ENCODE measurements at regions of chr3 and their contacts with region 1.

Region 1: GRCh38 chr3:88003115-88003755 is 55.6 kb downstream of the CGGBP1 start:
- DNase-seq: peak; percentile 55 to 75 (median 75)
- H3K4me3 ChIP-seq: no peak overlapping the region
- H3K4me3 Mint-ChIP-seq: no peak overlapping the region
- H3K27ac ChIP-seq: no peak overlapping the region
- H3K27ac Mint-ChIP-seq: peak overlapping the region in 1 of 7 donors; percentile 26
- H3K4me1 ChIP-seq: peaks cover 10 to 18% of the 10 kb centered on the region in 2 donors
- H3K4me1 Mint-ChIP-seq: peaks cover 27% of the 10 kb centered on the region
- H3K27me3 ChIP-seq: no peaks in the 10 kb centered on the region
- H3K27me3 Mint-ChIP-seq: no peaks in the 10 kb centered on the region
- CTCF ChIP-seq: peak; percentile 84

Region 2: DNA sequence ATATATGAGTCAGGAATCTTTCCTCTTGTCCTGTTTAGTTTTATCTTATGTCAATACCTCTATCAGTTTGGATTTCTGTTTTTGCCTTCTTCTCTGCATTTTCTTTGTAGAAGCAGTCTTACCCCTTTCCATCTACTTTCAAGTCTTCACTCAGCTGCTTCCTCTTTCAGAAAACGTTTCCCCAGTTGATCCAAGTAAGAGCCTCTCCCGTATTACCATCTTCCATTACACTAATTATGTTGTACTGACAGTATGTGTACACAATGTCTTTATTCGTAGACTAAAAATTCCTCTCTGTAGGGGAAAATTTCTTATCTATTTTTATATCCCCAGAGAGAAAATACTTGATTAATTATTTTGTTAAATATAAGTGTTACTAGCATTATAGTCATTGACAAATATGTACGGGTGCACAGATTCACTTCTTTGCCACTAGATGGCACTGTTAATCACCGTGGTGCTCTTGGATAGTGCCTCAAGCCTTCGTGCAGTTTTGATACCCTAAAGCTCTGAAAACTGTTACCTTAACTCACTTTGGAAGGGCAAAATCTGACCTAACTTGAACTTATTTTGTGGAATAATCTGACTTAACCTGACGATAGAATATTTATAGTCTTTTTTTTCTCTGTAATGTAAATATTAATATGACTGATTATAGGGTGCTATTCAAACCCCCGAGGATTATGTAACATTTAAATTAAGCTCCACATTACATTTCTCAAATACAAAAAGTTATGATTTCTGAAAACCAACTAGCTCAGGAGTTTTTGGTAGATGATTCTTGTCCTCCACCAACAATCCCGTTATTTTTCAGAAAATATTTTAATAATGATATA is 652.7 kb before region 1 on chr3:
- intact Hi-C with region 1: loop called (anchors 5 kb)
- DNase-seq: peak; percentile 32 to 54 (median 47)
- H3K4me3 ChIP-seq: no peak overlapping the region
- H3K4me3 Mint-ChIP-seq: no peak overlapping the region
- H3K27ac ChIP-seq: no peak overlapping the region
- H3K27ac Mint-ChIP-seq: no peak overlapping the region
- H3K4me1 ChIP-seq: no peaks in the 10 kb centered on the region
- H3K4me1 Mint-ChIP-seq: peaks cover 2% of the 10 kb centered on the region
- H3K27me3 ChIP-seq: no peaks in the 10 kb centered on the region
- H3K27me3 Mint-ChIP-seq: peaks cover 0 to 1% (median 0%) of the 10 kb centered on the region in 3 donors
- CTCF ChIP-seq: peak; percentile 88

Region 3: GRCh38 chr3:87771341-87772192 is 231.7 kb before region 1 on chr3:
- intact Hi-C with region 1: loop called in 1 of 2 experiments (anchors 10 kb)
- DNase-seq: peak; percentile 42 to 67 (median 66)
- H3K4me3 ChIP-seq: no peak overlapping the region
- H3K4me3 Mint-ChIP-seq: no peak overlapping the region
- H3K27ac ChIP-seq: no peak overlapping the region
- H3K27ac Mint-ChIP-seq: peak overlapping the region in 2 of 7 donors; percentile 4 to 67
- H3K4me1 ChIP-seq: peaks cover 0 to 3% of the 10 kb centered on the region in 2 donors
- H3K4me1 Mint-ChIP-seq: peaks cover 5% of the 10 kb centered on the region
- H3K27me3 ChIP-seq: no peaks in the 10 kb centered on the region
- H3K27me3 Mint-ChIP-seq: peaks cover 0 to 3% (median 2%) of the 10 kb centered on the region in 3 donors
- CTCF ChIP-seq: peak; percentile 87

Region 4: DNA sequence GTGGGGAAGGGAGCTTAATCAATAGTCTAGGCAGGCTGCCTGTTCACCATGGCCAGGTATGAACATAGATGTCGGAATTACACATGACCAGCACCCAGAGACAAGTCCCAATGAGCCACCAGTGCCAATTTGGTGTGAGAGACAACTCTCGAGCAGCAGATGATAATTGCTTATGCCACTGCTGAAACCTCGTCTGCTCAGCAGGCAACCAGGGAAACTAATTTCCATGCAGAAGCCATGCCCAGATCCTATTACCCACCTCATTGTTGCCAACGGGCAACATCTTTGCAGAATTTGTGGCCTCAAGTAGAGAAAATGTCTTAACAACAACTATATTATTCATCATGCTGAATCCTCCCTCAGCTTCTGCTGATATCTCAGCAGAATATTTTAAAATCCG is 29.3 kb before region 1 on chr3:
- intact Hi-C with region 1: no loop called
- DNase-seq: no peak
- H3K4me3 ChIP-seq: no peak overlapping the region
- H3K4me3 Mint-ChIP-seq: no peak overlapping the region
- H3K27ac ChIP-seq: no peak overlapping the region
- H3K27ac Mint-ChIP-seq: no peak overlapping the region
- H3K4me1 ChIP-seq: no peaks in the 10 kb centered on the region
- H3K4me1 Mint-ChIP-seq: no peaks in the 10 kb centered on the region
- H3K27me3 ChIP-seq: no peaks in the 10 kb centered on the region
- H3K27me3 Mint-ChIP-seq: no peaks in the 10 kb centered on the region
- CTCF ChIP-seq: no peak